AG04450 (cell line): ENCODE measurements at regions of chr18 and their contacts with region 1.

Region 1: DNA sequence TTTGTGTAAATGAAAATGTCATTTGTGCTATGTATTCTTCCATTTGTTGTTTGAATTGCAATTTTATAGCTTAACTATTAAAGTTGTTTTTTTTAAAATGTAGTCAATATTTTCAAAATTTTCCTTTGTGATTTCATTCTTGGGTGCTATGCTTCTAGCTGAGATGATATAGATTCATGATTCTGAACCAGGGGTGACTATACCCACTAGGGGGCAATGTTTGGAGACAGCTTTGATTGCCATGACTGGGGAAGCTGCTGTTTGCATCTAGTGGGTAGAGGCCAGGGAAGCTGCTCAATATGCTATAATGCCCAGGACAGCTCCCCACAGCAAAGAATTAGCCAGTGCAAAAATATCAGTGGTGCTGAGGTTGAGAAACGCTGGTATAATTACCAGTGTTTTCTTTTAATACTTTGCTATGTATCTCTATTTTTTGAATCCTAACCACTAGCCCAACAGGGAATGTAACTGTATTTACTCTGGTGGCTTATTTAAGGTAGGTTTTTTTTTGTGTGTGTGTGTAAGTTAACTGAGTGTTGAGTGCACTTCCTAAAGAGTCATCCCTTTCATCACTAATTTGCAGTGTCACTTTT is 99.7 kb downstream of the MEP1B start:
- DNase-seq: peak; percentile 36
- H3K4me3 ChIP-seq: no peak overlapping the region
- H3K27ac ChIP-seq: no peak overlapping the region
- H3K27me3 ChIP-seq: no peaks in the 10 kb centered on the region
- CTCF ChIP-seq: peak; percentile 89

Region 2: GRCh38 chr18:32271672-32272208 is 17.8 kb before region 1 on chr18:
- CTCF ChIA-PET with region 1: interaction called, 73 read pairs
- POLR2A ChIA-PET with region 1: no interaction called
- DNase-seq: peak; percentile 3
- H3K4me3 ChIP-seq: no peak overlapping the region
- H3K27ac ChIP-seq: no peak overlapping the region
- H3K27me3 ChIP-seq: no peaks in the 10 kb centered on the region
- CTCF ChIP-seq: peak; percentile 82

Region 3: GRCh38 chr18:32308493-32309120 is 19.0 kb after region 1 on chr18:
- CTCF ChIA-PET with region 1: interaction called, 61 read pairs
- POLR2A ChIA-PET with region 1: no interaction called
- DNase-seq: peak; percentile 70
- H3K4me3 ChIP-seq: no peak overlapping the region
- H3K27ac ChIP-seq: no peak overlapping the region
- H3K27me3 ChIP-seq: no peaks in the 10 kb centered on the region
- CTCF ChIP-seq: no peak

Region 4: GRCh38 chr18:32383050-32383819 is 93.7 kb after region 1 on chr18:
- CTCF ChIA-PET with region 1: interaction called, 17 read pairs
- POLR2A ChIA-PET with region 1: no interaction called
- DNase-seq: peak; percentile 83
- H3K4me3 ChIP-seq: no peak overlapping the region
- H3K27ac ChIP-seq: peak overlapping the region; percentile 40
- H3K27me3 ChIP-seq: no peaks in the 10 kb centered on the region
- CTCF ChIP-seq: no peak

Region 5: GRCh38 chr18:32480581-32480980 is 191.0 kb after region 1 on chr18:
- CTCF ChIA-PET with region 1: interaction called, 608 read pairs
- POLR2A ChIA-PET with region 1: no interaction called
- DNase-seq: no peak
- H3K4me3 ChIP-seq: no peak overlapping the region
- H3K27ac ChIP-seq: no peak overlapping the region
- H3K27me3 ChIP-seq: no peaks in the 10 kb centered on the region
- CTCF ChIP-seq: no peak